Psoas muscle (tissue), 8 donors: ENCODE measurements at regions of chr2 and their contacts with region 1.

Region 1: DNA sequence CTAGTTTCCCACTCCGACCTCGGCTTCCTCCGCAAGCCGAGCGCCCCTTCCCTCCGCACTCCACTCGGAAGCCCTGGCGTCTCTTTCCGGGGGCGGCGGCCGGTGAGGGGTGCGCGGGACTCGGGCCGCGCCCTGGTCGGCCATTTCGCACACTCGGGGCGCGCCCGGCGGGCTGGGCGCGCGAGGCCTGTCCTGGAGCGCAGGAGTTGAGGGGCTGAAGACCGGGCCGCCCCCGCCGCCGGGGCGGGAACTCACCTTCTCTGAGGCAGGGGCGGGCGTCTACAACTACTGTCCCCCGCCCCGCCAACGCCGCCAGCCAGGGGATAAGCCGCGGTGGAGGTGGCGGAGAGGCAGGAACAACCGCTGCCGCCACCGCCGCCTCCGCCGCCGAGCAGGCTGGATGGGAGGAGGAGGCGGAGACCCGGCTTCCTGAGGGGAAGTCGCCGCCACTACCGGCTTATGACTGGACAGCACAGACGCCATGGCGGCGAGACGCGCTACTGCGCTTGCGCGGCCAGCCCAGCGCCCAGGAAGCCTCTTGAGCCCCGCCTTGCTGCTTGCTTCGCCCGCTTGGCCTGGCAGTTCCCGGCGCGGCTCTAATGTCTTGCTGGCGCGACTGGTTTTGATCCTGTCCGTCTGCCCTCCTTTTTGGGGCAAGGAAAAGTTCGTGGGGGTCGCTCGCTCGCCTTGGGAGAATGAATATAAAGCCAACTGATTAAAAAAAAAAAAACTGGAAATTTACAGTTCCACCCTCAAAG is at the start of gene KRCC1:
- DNase-seq: peak; percentile 96 to 98
- ATAC-seq: peak; percentile 95 to 96 (median 95)
- H3K4me3 ChIP-seq: peak within 1 kb of the TSS; percentile 91
- H3K27ac ChIP-seq: peak within 1 kb of the TSS; percentile 99
- H3K4me1 ChIP-seq: peaks cover 23% of the 10 kb centered on the region
- H3K27me3 ChIP-seq: no peaks in the 10 kb centered on the region
- CTCF ChIP-seq: peak; percentile 7
- total RNA-seq, gene KRCC1: 10.8 to 24.1 (median 18.7) TPM

Region 2: DNA sequence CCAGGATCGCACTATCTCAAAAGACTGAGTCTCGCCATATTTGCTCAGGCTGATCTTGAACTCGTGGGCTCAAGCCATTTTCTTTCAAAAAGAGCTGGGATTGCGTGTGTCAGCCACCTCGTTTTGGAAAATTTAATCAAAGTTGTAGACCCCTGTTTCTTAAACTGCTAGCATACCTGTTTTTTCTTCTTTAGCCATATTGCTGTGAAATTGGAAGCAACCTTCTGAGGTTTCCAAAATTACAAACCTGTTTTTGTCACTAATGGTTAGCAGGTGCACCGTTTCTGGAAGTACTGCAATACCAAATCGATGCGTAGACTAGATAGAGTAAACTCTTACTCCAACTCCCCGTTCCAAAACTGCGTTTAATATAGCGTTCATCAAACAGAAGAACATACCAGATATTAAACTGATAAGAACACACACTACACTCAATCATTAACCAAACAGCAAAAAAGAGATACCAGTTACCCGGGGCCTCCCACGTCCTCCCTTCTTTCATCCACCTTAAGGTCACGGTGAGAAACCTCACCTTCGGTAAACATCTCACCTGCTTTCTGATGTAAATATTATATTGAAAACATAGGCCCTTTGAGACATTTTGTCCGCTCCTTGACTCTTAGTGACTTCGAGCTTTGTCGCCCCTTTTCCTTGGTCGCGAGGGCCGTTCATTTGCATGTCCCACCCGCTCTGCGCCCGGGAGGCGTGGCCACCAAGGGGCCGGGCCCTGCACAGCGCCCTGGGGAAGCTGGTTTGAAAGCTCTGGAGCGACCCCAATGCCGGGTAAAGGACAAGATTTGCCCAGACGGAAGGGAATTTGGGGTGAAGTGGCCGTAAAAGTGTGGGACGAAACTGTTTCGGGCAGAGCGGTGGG is 39.2 kb before region 1 on chr2 and contains the start of gene RNU2-63P:
- intact Hi-C with region 1: loop called in 1 of 2 experiments (anchors 5 kb)
- DNase-seq: peak; percentile 70 to 84
- ATAC-seq: peak; percentile 94 to 98 (median 96)
- H3K4me3 ChIP-seq: peak within 1 kb of the TSS; percentile 71
- H3K27ac ChIP-seq: peak within 1 kb of the TSS; percentile 51
- H3K4me1 ChIP-seq: no peaks in the 10 kb centered on the region
- H3K27me3 ChIP-seq: no peaks in the 10 kb centered on the region
- CTCF ChIP-seq: no peak
- total RNA-seq, gene RNU2-63P: 5.0 TPM in 1 of 4 donors, not detected in the others

Region 3: DNA sequence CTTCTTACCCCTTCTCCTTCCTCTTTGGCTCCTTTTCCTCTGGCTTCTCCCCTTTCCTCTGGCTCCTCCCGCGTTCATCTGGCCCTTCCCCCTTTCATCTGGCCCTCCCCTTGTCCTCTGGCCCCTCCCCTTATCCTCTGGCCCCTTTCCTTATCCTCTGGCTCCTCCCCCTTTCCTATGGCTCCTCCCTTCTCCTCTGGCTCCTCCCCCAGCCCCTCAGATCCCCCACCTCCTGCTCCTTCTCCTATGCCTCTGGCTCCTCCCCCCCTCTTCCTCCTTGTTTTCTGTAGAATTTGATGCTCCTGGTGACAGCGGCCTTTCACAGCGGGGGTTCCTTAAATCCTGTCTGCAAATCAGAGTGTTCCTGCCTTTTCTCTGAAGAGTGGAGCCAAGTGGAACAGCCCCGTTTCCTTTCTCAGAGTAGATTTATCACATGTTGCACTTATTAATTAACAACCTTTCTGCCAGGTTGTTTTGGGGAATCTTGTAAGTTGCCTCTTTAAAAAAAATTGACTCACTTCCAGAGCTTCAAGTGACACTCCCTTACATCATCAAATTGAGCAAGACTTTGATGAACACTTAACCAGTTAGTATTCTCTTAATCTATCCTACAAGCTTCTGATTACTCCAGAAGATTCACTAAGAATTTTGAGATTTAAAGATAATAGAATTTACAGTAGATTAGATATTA is 44.4 kb after region 1 on chr2:
- intact Hi-C with region 1: loop called (anchors 5 kb)
- DNase-seq: peak in 1 of 2 donors; percentile 75
- ATAC-seq: peak; percentile 80 to 84 (median 82)
- H3K4me3 ChIP-seq: peak overlapping the region; percentile 11
- H3K27ac ChIP-seq: peak overlapping the region; percentile 80
- H3K4me1 ChIP-seq: peaks cover 11% of the 10 kb centered on the region
- H3K27me3 ChIP-seq: no peaks in the 10 kb centered on the region
- CTCF ChIP-seq: no peak

Region 4: GRCh38 chr2:88159955-88160415 is 104.4 kb after region 1 on chr2:
- intact Hi-C with region 1: loop called (anchors 1 to 2 kb)
- DNase-seq: no peak
- ATAC-seq: peak; percentile 79 to 92 (median 88)
- H3K4me3 ChIP-seq: no peak overlapping the region
- H3K27ac ChIP-seq: no peak overlapping the region
- H3K4me1 ChIP-seq: peaks cover 3% of the 10 kb centered on the region
- H3K27me3 ChIP-seq: no peaks in the 10 kb centered on the region
- CTCF ChIP-seq: peak; percentile 89

Region 5: DNA sequence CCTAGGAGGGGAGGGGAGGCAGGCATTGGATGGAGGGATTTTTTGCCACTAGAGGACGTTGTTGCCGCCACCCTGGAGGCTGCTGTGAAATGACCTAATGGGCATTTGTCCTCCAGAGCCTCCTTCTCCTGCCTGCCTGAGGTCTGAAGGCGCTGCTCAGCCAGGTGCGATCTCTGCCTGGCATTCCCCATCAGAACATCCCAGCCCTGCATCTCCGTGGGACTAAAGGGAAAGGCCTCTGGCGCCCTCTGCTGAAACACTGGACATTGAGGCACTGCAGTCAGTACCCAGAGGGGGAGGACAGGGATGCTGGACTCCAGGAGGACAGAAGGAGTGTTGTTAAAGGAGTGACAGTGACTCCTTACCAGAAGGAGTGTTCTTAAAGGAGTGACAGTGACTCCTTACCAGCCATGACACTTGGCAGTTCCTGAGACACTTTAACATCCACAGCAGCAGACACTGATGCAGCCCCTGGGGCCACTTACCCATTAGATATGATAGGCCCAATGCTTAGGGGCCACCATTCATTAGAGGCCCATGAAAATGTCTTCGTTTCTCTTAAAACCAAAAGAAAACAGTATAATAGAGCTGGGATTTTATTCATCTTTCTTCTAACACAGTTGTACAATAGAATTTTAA is 131.6 kb after region 1 on chr2:
- intact Hi-C with region 1: loop called in 1 of 2 experiments (anchors 5 kb)
- DNase-seq: peak; percentile 49 to 85
- ATAC-seq: peak; percentile 71 to 95 (median 80)
- H3K4me3 ChIP-seq: no peak overlapping the region
- H3K27ac ChIP-seq: no peak overlapping the region
- H3K4me1 ChIP-seq: no peaks in the 10 kb centered on the region
- H3K27me3 ChIP-seq: no peaks in the 10 kb centered on the region
- CTCF ChIP-seq: peak; percentile 70